K562 (cell line): ENCODE measurements at regions of chr7 and their contacts with region 1.

Region 1: GRCh38 chr7:106736508-106737201 is 75.7 kb upstream of the CCDC71L start:
- DNase-seq: peak; percentile 43 to 80 (median 64)
- ATAC-seq: peak; percentile 94
- H3K4me3 ChIP-seq: no peak overlapping the region
- H3K27ac ChIP-seq: peak overlapping the region; percentile 18; the same call in 1 of the 3 replicates
- H3K4me1 ChIP-seq: peaks cover 0 to 16% of the 10 kb centered on the region in 2 experiments; a peak in 2 of 5 replicates
- H3K27me3 ChIP-seq: no peaks in the 10 kb centered on the region
- CTCF ChIP-seq: peak; percentile 83 to 92 (median 90)
- EP300 ChIP-seq: peak; percentile 57; the same call in 1 of the 2 replicates
- POLR2A ChIP-seq: no peak
- RAD21 ChIP-seq: peak; percentile 97 to 99

Region 2: DNA sequence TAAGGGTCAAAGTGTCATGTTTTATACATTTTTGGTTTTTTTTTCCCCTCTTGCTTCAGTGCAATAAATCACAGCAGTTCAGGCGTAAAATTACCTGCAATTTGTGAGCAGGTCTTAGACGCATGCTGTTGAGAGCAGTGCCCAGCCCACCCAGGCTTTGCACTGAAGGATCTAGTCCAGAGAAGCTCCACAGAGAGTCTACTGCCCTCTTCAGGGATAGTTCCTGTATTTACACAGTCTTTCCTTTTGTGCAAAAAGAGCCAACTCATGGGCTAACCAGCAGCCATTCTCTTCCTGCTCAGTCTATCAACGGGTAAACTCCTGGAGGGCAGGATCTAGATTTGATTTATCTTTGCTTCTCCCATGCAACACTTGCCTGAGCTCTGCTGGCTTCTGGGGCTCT is 369.6 kb before region 1 on chr7:
- CTCF ChIA-PET with region 1: no interaction called
- POLR2A ChIA-PET with region 1: no interaction called
- in situ Hi-C with region 1: no loop called
- intact Hi-C with region 1: loop called (anchors 5 kb)
- DNase-seq: peak in 3 of 4 experiments; percentile 33 to 77 (median 68)
- ATAC-seq: peak; percentile 96
- H3K4me3 ChIP-seq: no peak overlapping the region
- H3K27ac ChIP-seq: no peak overlapping the region
- H3K4me1 ChIP-seq: peaks cover 0 to 18% of the 10 kb centered on the region in 2 experiments; a peak in 4 of 5 replicates
- H3K27me3 ChIP-seq: no peaks in the 10 kb centered on the region
- CTCF ChIP-seq: peak; percentile 69 to 87 (median 74)
- EP300 ChIP-seq: no peak; the same call in 1 of the 2 replicates
- POLR2A ChIP-seq: no peak
- RAD21 ChIP-seq: peak; percentile 85 to 92

Region 3: DNA sequence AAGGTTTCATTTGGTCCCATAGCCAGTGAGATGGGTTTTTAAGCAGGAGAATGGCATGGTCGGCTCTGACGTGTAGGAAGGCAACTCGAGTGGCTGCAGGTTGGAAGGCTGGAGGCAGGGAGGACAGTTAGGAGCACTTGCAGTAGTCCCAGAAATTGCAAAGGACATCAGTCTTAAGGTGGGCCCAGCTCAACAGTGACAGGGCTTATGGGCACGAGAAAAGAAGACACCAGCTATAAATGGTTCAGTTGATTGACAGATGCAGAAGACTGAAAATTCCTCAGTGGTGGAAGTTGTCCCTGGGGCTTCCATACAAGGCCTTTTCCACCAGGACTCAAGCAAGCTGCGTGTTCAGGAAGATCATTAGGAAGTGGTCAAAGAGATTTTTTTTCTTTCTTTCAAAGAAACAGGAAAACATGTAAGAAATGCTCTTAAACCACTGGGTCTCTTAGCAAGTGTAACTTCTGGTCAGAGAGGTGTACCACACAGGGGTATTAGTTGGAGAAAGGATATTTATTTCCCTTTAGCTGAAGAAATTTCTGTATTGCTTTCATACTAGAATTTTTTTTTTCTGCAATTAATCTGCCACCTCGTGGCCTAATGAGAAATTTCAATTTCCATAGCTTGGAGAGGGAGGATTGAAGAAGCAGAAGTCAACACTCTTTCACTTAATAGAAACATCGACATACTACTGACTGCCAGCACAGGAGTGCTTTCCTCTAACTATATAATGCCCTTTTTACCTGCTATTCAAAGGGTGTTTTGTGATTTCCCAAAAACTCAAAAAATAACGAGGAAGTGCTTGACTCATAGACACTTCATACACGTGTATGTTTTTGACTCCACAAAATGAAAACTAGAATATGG is 274.4 kb before region 1 on chr7:
- CTCF ChIA-PET with region 1: interaction called, 3 read pairs
- POLR2A ChIA-PET with region 1: interaction called, 3 read pairs
- in situ Hi-C with region 1: no loop called
- intact Hi-C with region 1: loop called (anchors 2 kb)
- DNase-seq: peak; percentile 55 to 71 (median 60)
- ATAC-seq: peak; percentile 81
- H3K4me3 ChIP-seq: no peak overlapping the region
- H3K27ac ChIP-seq: no peak overlapping the region
- H3K4me1 ChIP-seq: peaks cover 0 to 15% of the 10 kb centered on the region in 2 experiments; a peak in 3 of 5 replicates
- H3K27me3 ChIP-seq: no peaks in the 10 kb centered on the region
- CTCF ChIP-seq: peak; percentile 58 to 86 (median 62); a peak in 5 of 6 replicates
- EP300 ChIP-seq: no peak; the same call in 1 of the 2 replicates
- POLR2A ChIP-seq: no peak
- RAD21 ChIP-seq: peak; percentile 95 to 98

Region 4: DNA sequence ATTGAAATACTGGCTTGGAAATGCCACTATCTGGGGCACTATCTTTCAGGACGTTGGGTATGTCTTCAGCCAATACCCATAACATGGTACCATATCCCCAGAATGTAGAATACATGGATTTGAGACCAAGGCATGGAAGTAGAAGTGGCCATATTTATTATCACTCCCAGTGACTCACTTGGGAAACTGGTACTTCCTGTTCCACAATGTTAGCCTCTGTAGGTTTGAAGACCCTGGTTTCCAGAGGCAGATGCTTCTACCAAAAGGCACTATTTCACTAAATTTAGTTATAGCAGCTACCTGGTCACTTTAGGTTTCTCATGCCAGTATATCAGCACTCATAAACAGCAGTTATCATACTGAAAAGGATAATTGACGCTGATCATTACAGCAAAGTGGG is 259.9 kb before region 1 on chr7:
- CTCF ChIA-PET with region 1: no interaction called
- POLR2A ChIA-PET with region 1: no interaction called
- in situ Hi-C with region 1: no loop called
- intact Hi-C with region 1: loop called (anchors 5 kb)
- DNase-seq: no peak
- ATAC-seq: peak; percentile 10; the same call in 1 of the 3 replicates
- H3K4me3 ChIP-seq: no peak overlapping the region
- H3K27ac ChIP-seq: no peak overlapping the region
- H3K4me1 ChIP-seq: peaks cover 4 to 17% of the 10 kb centered on the region in 2 experiments; a peak in 3 of 5 replicates
- H3K27me3 ChIP-seq: no peaks in the 10 kb centered on the region
- CTCF ChIP-seq: no peak
- EP300 ChIP-seq: no peak
- POLR2A ChIP-seq: no peak
- RAD21 ChIP-seq: no peak

Region 5: GRCh38 chr7:106542550-106543220 is 194.0 kb before region 1 on chr7:
- CTCF ChIA-PET with region 1: interaction called, 34 read pairs
- POLR2A ChIA-PET with region 1: interaction called, 6 read pairs
- in situ Hi-C with region 1: loop called (anchors 5 kb)
- intact Hi-C with region 1: loop called (anchors 1 kb)
- DNase-seq: peak; percentile 77 to 96 (median 84)
- ATAC-seq: peak; percentile 96
- H3K4me3 ChIP-seq: no peak overlapping the region
- H3K27ac ChIP-seq: peak overlapping the region; percentile 30
- H3K4me1 ChIP-seq: peaks cover 0 to 22% of the 10 kb centered on the region in 2 experiments; a peak in 2 of 5 replicates
- H3K27me3 ChIP-seq: no peaks in the 10 kb centered on the region
- CTCF ChIP-seq: peak; percentile 95 to 98 (median 98)
- EP300 ChIP-seq: peak; percentile 63
- POLR2A ChIP-seq: no peak
- RAD21 ChIP-seq: peak; percentile 100